Endothelial cell of umbilical vein (primary cell): ENCODE measurements at regions of chr9 and their contacts with region 1.

Region 1: DNA sequence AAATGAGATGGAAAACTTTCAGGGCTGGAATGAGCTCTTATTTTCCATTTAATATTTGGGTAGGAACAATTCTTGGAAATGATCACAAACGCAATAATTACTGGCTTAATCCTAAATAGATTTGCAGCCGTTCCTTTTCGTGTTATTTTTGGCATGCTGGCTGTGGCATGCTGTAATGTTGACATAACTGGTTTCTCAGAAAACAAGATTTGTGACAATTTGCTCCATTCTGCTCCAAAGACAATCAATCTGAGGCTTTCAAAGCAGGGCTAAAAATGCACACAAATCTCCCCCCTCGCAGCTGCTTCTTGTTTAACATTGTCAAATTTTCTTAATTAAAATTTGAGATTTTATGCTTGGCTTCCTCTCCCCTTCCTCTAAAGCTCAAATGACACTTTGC is 151.2 kb downstream of the TTC39B start:
- DNase-seq: peak; percentile 97
- H3K4me3 ChIP-seq: no peak overlapping the region
- H3K27ac ChIP-seq: peak overlapping the region; percentile 79
- H3K4me1 ChIP-seq: peaks cover 36% of the 10 kb centered on the region
- H3K27me3 ChIP-seq: no peaks in the 10 kb centered on the region
- CTCF ChIP-seq: no peak
- POLR2A ChIP-seq: no peak

Region 2: DNA sequence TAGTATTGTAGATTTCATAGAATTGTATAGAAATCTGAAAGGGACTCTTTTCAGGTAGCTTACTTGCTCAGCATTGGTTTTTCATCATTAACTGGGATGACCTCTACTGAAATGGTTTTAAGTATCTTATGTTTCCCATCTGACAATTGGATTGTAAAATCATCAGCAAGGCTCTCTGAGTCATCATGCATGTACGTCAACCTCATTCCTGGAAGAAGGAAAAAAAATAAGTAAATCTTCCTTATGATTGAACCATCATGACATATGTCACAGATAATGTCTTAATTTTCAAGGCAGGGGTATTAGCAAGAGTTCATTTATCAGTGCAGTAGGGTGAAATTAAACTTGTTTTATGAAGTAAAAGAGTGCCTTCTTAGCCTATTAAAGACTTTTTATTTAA is 358.4 kb before region 1 on chr9:
- CTCF ChIA-PET with region 1: no interaction called
- POLR2A ChIA-PET with region 1: no interaction called
- dilution Hi-C with region 1: no loop called
- intact Hi-C with region 1: no loop called
- DNase-seq: no peak
- H3K4me3 ChIP-seq: no peak overlapping the region
- H3K27ac ChIP-seq: no peak overlapping the region
- H3K4me1 ChIP-seq: no peaks in the 10 kb centered on the region
- H3K27me3 ChIP-seq: no peaks in the 10 kb centered on the region
- CTCF ChIP-seq: no peak
- POLR2A ChIP-seq: no peak

Region 3: GRCh38 chr9:14993061-14993800 is 162.6 kb before region 1 on chr9:
- CTCF ChIA-PET with region 1: no interaction called
- POLR2A ChIA-PET with region 1: no interaction called
- dilution Hi-C with region 1: no loop called
- intact Hi-C with region 1: loop called (anchors 1 kb)
- DNase-seq: peak; percentile 84
- H3K4me3 ChIP-seq: peak overlapping the region; percentile 33 to 69 (median 45)
- H3K27ac ChIP-seq: peak overlapping the region; percentile 88
- H3K4me1 ChIP-seq: peaks cover 15% of the 10 kb centered on the region
- H3K27me3 ChIP-seq: no peaks in the 10 kb centered on the region
- CTCF ChIP-seq: no peak
- POLR2A ChIP-seq: peak; percentile 62

Region 4: GRCh38 chr9:15142878-15143534 is 12.8 kb before region 1 on chr9:
- CTCF ChIA-PET with region 1: interaction called, 14 read pairs
- POLR2A ChIA-PET with region 1: no interaction called
- dilution Hi-C with region 1: no loop called
- intact Hi-C with region 1: no loop called
- DNase-seq: peak; percentile 72
- H3K4me3 ChIP-seq: no peak overlapping the region
- H3K27ac ChIP-seq: no peak overlapping the region
- H3K4me1 ChIP-seq: no peaks in the 10 kb centered on the region
- H3K27me3 ChIP-seq: peaks cover 5 to 7% of the 10 kb centered on the region in 2 experiments
- CTCF ChIP-seq: peak; percentile 70 to 78
- POLR2A ChIP-seq: no peak